Common myeloid progenitor, CD34-positive (primary cell): ENCODE measurements at regions of chr11 and their contacts with region 1.

Region 1: DNA sequence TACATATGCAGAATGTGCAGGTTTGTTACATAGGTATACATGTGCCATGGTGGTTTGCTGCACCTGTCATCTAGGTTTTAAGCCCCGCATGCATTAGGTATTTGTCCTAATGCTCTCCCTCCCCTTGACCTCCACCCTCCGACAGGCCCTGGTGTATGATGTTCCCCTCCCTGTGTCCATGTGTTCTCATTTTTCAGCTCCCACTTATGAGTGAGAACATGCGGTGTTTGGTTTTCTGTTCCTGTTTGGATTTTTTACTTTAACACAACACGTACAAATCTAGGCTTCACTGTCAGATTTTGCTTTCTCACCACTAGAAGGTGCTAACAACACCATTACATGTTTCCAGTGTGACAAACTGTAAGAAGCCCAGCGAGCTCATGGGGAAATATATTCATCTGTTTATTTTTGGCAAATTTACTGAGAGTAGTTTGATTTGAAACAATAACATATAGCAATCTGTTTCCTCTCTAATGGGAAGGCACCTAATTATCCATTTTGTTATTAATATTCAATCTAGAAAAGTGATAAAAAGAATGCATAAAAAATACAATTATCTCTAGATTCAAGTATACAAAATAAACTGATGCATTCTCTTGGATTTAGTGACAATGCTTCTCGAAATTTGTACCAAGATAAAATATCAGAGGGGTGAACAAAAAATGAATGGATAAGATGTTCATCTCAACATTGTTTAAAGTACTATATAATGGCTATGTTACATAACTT is 23.2 kb upstream of the BIRC3 start:
- DNase-seq: peak; percentile 67 to 84 (median 83)
- H3K4me3 ChIP-seq: peak overlapping the region in 1 of 7 experiments; percentile 42
- H3K27ac ChIP-seq: no peak overlapping the region
- H3K4me1 ChIP-seq: peaks cover 0 to 12% (median 5%) of the 10 kb centered on the region in 4 experiments
- H3K27me3 ChIP-seq: no peaks in the 10 kb centered on the region

Region 2: GRCh38 chr11:102306048-102306585 is 12.1 kb after region 1 on chr11:
- CTCF ChIA-PET with region 1: interaction called, 142 read pairs
- POLR2A ChIA-PET with region 1: interaction called, 3 read pairs
- DNase-seq: no peak
- H3K4me3 ChIP-seq: no peak overlapping the region
- H3K27ac ChIP-seq: no peak overlapping the region
- H3K4me1 ChIP-seq: peaks cover 6 to 12% (median 9%) of the 10 kb centered on the region in 4 experiments
- H3K27me3 ChIP-seq: no peaks in the 10 kb centered on the region

Region 3: DNA sequence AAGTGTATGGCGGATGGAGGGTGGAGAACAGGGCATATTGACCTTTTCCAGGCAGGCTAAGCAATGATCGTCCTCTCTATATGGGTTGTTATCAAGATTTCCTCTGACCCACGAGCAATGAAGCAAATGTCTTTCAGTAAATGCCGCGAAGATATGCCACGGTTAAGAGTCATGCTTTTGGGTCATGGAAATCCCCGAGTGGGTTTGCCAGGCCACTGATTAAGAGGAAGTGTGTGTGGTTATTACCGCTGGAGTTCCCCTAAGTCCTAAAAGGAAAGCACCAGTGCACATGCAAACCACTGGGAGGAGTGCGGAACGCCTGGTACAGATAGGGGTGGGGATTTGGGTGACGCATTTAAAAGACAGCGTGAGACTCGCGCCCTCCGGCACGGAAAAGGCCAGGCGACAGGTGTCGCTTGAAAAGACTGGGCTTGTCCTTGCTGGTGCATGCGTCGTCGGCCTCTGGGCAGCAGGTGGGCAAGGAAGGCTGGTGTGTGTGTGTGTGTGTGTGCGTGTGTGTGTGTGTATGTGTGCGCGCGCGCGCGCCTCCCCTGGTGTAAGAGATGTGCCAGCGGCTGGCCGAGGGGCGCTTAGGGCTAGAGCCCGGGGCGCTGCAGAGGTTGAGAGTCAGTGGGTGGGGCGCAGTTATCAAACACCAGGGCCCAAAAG is 23.2 kb after region 1 on chr11 and contains the start of gene BIRC3:
- CTCF ChIA-PET with region 1: interaction called, 142 read pairs
- POLR2A ChIA-PET with region 1: interaction called, 3 read pairs
- DNase-seq: peak; percentile 99 to 100 (median 100)
- H3K4me3 ChIP-seq: peak within 1 kb of the TSS; percentile 52 to 88 (median 73)
- H3K27ac ChIP-seq: peak within 1 kb of the TSS; percentile 82 to 91
- H3K4me1 ChIP-seq: peaks cover 25 to 62% (median 41%) of the 10 kb centered on the region in 4 experiments
- H3K27me3 ChIP-seq: no peaks in the 10 kb centered on the region

Region 4: GRCh38 chr11:102323542-102324251 is 29.7 kb after region 1 on chr11:
- CTCF ChIA-PET with region 1: interaction called, 142 read pairs
- POLR2A ChIA-PET with region 1: no interaction called
- DNase-seq: no peak
- H3K4me3 ChIP-seq: no peak overlapping the region
- H3K27ac ChIP-seq: no peak overlapping the region
- H3K4me1 ChIP-seq: peaks cover 11 to 47% (median 20%) of the 10 kb centered on the region in 4 experiments
- H3K27me3 ChIP-seq: no peaks in the 10 kb centered on the region

Region 5: DNA sequence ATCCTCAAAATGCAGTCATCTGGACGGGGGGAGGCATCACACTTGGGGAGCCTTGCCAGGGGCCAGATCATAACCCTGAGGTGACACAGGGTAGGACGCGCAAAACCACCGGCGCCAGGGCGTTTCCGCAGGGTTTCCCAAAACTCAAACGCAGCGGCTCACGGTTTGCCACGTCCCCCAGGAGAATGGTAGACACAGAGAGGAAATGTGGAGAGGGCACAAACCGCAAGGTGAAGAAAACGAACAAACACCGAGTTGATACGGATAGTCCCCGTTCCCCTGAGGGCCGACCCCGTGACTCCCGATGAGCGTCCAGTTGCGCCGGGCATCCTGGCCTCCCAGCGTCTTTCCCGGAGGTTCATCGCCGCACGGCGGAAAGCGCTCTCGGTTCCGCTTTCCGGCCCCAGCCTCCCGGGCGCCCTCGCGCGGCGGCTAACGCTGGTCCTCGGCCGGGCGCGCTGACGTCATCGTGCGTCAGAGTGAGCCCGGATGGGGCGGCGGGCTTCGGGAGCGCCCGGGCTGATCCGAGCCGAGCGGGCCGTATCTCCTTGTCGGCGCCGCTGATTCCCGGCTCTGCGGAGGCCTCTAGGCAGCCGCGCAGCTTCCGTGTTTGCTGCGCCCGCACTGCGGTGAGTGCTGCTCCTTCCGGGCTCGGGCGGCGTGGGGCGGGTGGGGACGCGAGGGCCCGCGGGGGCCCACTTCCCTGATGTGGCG is 52.9 kb after region 1 on chr11 and contains the start of gene BIRC2:
- CTCF ChIA-PET with region 1: interaction called, 23 read pairs
- POLR2A ChIA-PET with region 1: interaction called, 9 read pairs
- DNase-seq: peak; percentile 95 to 98 (median 97)
- H3K4me3 ChIP-seq: peak within 1 kb of the TSS; percentile 84 to 98 (median 94)
- H3K27ac ChIP-seq: peak within 1 kb of the TSS; percentile 95 to 98
- H3K4me1 ChIP-seq: peaks cover 10 to 27% (median 25%) of the 10 kb centered on the region in 4 experiments
- H3K27me3 ChIP-seq: no peaks in the 10 kb centered on the region